Left cardiac atrium (tissue), 4 donors: ENCODE measurements at regions of chr5 and their contacts with region 1.

Region 1: GRCh38 chr5:126837906-126838539 is 61.1 kb downstream of the LMNB1 start:
- DNase-seq: no peak
- ATAC-seq: peak; percentile 67 to 74

Region 2: GRCh38 chr5:127313847-127314473 is 475.9 kb after region 1 on chr5:
- intact Hi-C with region 1: loop called in 1 of 2 experiments (anchors 5 kb)
- DNase-seq: peak; percentile 67
- ATAC-seq: peak in 1 of 2 donors; percentile 70

Region 3: GRCh38 chr5:127492854-127493738 is 655.1 kb after region 1 on chr5:
- intact Hi-C with region 1: loop called in 1 of 2 experiments (anchors 5 kb)
- DNase-seq: no peak
- ATAC-seq: no peak